ENCODE measurements at regions of chr17 and their contacts with region 1.

Region 1: GRCh38 chr17:44899069-44899782 is at the start of gene EFTUD2:
- DNase-seq: peak; percentile 88
- H3K4me3 Mint-ChIP-seq: peak within 1 kb of the TSS; percentile 97
- H3K27ac Mint-ChIP-seq: peak within 1 kb of the TSS; percentile 98
- H3K4me1 Mint-ChIP-seq: peaks cover 30% of the 10 kb centered on the region
- H3K27me3 Mint-ChIP-seq: peaks cover 12% of the 10 kb centered on the region
- total RNA-seq, gene EFTUD2: 206 and 219 TPM in 2 replicates

Region 2: GRCh38 chr17:44708401-44709181 is 190.6 kb before region 1 on chr17 and contains the start of gene DBF4B:
- intact Hi-C with region 1: loop called (anchors 1 kb)
- DNase-seq: peak; percentile 81
- H3K4me3 Mint-ChIP-seq: no peak within 1 kb of the TSS
- H3K27ac Mint-ChIP-seq: no peak within 1 kb of the TSS
- H3K4me1 Mint-ChIP-seq: peaks cover 5% of the 10 kb centered on the region
- H3K27me3 Mint-ChIP-seq: peaks cover 7% of the 10 kb centered on the region
- total RNA-seq, gene DBF4B: 22.5 and 22.8 TPM in 2 replicates

Region 3: DNA sequence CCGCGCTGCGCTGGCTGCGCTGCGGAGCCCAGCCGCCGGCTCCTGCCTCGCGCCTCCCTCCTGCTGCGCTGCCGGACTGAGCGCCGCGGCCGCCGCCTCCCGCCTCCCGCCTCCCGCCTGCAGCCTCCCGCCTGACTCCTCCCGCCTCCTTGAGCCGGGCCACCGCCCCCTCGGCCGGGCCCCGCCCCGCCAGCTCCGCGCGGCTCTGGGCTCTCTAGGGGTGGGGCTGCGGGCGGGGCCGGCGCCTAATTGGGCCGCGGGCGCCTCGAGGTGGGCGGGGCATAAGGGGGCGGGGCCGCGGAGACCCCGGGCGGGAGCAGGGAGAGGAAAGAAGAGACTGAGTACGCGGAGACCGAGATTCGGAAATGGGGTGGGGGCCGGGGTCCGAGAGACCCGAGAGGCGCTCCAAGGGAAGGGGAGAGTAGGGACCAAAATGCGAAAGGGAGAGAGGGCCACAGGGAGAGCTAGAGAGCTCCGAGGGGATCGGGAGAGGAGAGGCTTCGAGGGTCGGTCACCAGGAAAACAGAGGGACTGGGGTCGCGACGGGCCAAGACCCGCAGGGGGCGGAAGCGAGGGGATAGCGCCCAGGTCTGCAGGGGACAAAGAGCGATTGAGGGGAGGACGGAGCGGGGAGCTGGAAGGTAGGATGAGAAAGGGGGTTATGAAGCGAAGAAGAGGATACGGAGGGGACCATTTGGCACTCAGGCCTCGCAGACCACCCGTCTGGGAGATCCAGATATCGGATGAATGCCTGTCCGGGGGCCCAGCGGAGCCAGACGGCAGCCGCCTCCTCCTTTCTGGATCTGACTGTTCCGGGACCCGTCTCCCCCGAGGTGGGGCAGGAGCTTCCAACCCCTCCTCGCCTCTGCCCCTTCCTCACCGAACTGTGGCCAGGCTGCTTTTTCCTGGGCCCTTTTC is 69.3 kb after region 1 on chr17 and contains the start of gene C1QL1:
- intact Hi-C with region 1: loop called (anchors 1 kb)
- DNase-seq: peak; percentile 86
- H3K4me3 Mint-ChIP-seq: peak within 1 kb of the TSS; percentile 78
- H3K27ac Mint-ChIP-seq: no peak within 1 kb of the TSS
- H3K4me1 Mint-ChIP-seq: peaks cover 38% of the 10 kb centered on the region
- H3K27me3 Mint-ChIP-seq: peaks cover 67% of the 10 kb centered on the region
- total RNA-seq, gene C1QL1: 0.39 and 0.54 TPM in 2 replicates

Region 4: GRCh38 chr17:45060797-45061605 is 161.8 kb after region 1 on chr17 and contains the start of gene NMT1:
- intact Hi-C with region 1: loop called (anchors 1 kb)
- DNase-seq: peak; percentile 96
- H3K4me3 Mint-ChIP-seq: peak within 1 kb of the TSS; percentile 92
- H3K27ac Mint-ChIP-seq: peak within 1 kb of the TSS; percentile 100
- H3K4me1 Mint-ChIP-seq: peaks cover 25% of the 10 kb centered on the region
- H3K27me3 Mint-ChIP-seq: peaks cover 2% of the 10 kb centered on the region
- total RNA-seq, gene NMT1: 168 and 173 TPM in 2 replicates

Region 5: GRCh38 chr17:46193626-46194392 is 1294.6 kb after region 1 on chr17:
- intact Hi-C with region 1: loop called (anchors 10 kb)
- DNase-seq: peak; percentile 95
- H3K4me3 Mint-ChIP-seq: peak overlapping the region; percentile 73
- H3K27ac Mint-ChIP-seq: peak overlapping the region; percentile 91
- H3K4me1 Mint-ChIP-seq: peaks cover 68% of the 10 kb centered on the region
- H3K27me3 Mint-ChIP-seq: no peaks in the 10 kb centered on the region

Measured in activated T-helper 1 cell treated with anti-CD3 and anti-CD28 coated beads, Interleukin-12 subunit alpha, Interleukin-12 subunit beta, Interleukin-2, Interleukin-4 antibody, amounts not matched to agents 30 ng/mL and 10 ng/mL and 1 ng/mL, durations not matched to agents 14 hours and 24 hours and 36 hours (primary cell).